Tibial artery (tissue), 4 donors: ENCODE measurements at regions of chr7 and their contacts with region 1.

Region 1: GRCh38 chr7:97064967-97065587 is 40.4 kb upstream of the DLX5 start:
- DNase-seq: no peak
- H3K4me3 ChIP-seq: no peak overlapping the region
- H3K27ac ChIP-seq: no peak overlapping the region
- H3K4me1 ChIP-seq: no peaks in the 10 kb centered on the region
- H3K27me3 ChIP-seq: no peaks in the 10 kb centered on the region
- CTCF ChIP-seq: peak; percentile 55 to 60

Region 2: GRCh38 chr7:95916573-95917297 is 1148.3 kb before region 1 on chr7:
- intact Hi-C with region 1: loop called (anchors 10 kb)
- DNase-seq: peak; percentile 80 to 83
- H3K4me3 ChIP-seq: peak overlapping the region; percentile 7 to 12
- H3K27ac ChIP-seq: no peak overlapping the region
- H3K4me1 ChIP-seq: no peaks in the 10 kb centered on the region
- H3K27me3 ChIP-seq: no peaks in the 10 kb centered on the region
- CTCF ChIP-seq: peak; percentile 85 to 88